ENCODE measurements at regions of chr5 and their contacts with region 1.

Region 1: DNA sequence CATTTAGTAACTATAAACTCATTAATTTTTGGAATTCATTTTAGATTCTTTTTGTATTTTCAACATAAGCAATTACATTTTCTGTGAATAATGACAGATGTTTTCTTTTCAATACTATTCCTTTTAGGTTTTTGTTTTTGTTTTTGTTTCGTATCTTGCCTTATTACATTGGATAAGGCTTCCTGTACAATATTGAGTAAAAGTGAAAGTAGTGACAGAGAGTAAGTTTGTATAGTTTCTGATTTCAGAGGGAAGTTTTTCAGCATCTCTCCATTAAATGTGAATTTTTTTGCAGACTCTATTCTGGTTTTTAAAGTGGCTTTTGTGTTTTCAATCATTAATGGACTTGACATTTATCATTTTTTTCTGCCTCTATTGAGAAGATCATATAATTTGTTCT is 12.8 kb upstream of the CAMK4 start:
- DNase-seq: no peak
- H3K4me3 Mint-ChIP-seq: no peak overlapping the region
- H3K27ac Mint-ChIP-seq: no peak overlapping the region
- H3K4me1 Mint-ChIP-seq: peaks cover 42% of the 10 kb centered on the region
- H3K27me3 Mint-ChIP-seq: no peaks in the 10 kb centered on the region

Region 2: DNA sequence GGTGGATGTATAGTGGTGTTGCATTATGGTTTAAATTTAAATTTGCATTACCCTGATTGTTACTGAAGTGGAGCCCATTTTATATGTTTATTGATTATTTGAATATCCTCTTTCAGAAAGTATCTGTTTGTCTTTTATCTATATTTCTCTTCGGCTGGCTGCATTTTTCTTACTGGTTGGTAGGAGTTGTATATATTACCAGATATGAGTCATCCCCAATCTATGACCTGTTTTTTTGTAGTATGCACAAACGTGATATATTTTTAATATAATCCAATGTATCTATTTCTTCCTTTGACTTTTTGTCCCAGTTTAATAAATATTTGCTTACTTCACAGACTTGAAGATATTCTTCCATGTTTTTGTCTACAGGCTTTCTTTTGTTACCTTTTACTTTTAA is 16.4 kb before region 1 on chr5:
- CTCF ChIA-PET with region 1: no interaction called
- intact Hi-C with region 1: no loop called
- DNase-seq: no peak
- H3K4me3 Mint-ChIP-seq: no peak overlapping the region
- H3K27ac Mint-ChIP-seq: no peak overlapping the region
- H3K4me1 Mint-ChIP-seq: peaks cover 3% of the 10 kb centered on the region
- H3K27me3 Mint-ChIP-seq: peaks cover 2% of the 10 kb centered on the region

Region 3: GRCh38 chr5:111223889-111224563 is 12.7 kb after region 1 on chr5 and contains the start of gene CAMK4:
- CTCF ChIA-PET with region 1: interaction called, 6 read pairs
- intact Hi-C with region 1: loop called (anchors 1 kb)
- DNase-seq: peak; percentile 75
- H3K4me3 Mint-ChIP-seq: peak within 1 kb of the TSS; percentile 95
- H3K27ac Mint-ChIP-seq: peak within 1 kb of the TSS; percentile 97
- H3K4me1 Mint-ChIP-seq: peaks cover 25% of the 10 kb centered on the region
- H3K27me3 Mint-ChIP-seq: no peaks in the 10 kb centered on the region
- total RNA-seq, gene CAMK4: 40.6 to 44.4 TPM

Measured in activated naive CD4-positive, alpha-beta T cell treated with anti-CD3 and anti-CD28 coated beads for 36 hours (primary cell).